Cardiac septum (tissue), 1 donor: ENCODE measurements at regions of chr12 and their contacts with region 1.

Region 1: GRCh38 chr12:810671-811415 is 58.5 kb downstream of the WNK1 start:
- DNase-seq: no peak

Region 2: DNA sequence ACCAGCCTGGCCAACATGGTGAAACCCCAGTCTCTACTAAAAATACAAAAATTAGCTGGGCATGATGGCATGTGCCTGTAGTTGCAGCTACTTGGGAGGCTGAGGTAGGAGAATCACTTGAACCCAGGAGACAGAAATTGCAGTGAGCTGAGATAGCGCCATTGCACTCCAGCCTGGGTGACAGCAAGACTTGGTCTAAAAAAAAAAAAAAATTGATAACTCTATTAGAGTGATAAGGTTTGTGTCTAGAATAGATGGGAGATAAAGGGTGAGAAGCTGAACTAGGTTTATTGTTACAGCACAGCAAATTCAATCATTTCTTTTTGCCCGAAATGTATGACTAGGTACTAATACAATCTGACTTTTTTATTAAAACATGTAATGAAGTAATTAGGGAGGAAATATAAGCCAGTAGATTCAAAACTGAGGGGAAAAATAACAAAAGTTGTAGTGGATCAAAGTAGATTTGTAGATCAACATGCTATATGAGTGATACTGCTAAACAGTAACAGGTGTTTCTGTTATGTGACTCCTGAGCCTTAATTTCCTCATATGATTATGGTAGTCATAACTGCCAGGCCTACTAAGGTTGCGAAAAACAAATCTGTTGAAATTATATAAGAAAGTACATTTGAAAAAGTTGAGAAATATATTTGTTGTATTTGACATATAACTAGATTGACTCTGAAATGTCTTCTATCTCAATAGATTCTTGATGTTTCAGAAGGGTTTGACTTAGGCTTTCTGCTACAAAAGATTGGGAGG is 25.1 kb after region 1 on chr12:
- intact Hi-C with region 1: no loop called
- DNase-seq: no peak

Region 3: DNA sequence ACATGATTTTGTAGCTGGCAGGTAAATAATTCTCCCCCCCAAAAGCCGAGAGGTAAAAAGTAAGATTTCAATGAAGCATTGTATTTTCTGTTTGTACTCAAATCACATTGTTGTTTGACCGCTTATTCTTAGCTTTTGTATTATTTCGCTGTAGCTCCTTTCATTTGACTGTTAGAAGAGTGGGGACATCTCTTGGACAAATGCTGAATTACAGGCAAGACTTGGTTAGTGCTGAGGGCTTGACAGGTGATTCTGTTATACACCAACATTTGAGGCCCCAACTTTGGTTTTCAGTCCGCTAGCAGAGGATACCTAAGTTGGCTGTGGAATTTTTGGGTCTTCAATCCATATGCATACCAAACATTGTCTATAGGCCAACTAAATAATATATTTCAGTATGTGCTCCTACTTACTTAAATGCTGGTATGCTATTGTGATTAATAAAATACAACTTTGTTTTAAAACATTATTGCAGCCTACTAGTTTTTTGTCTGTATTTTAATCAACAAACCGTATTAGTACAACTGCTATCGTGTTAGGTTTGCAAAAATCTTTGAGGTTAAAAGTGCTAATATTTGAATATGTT is 282.4 kb after region 1 on chr12:
- intact Hi-C with region 1: loop called (anchors 10 kb)
- DNase-seq: no peak